Panc1 (cell line): ENCODE measurements at regions of chr11 and their contacts with region 1.

Region 1: DNA sequence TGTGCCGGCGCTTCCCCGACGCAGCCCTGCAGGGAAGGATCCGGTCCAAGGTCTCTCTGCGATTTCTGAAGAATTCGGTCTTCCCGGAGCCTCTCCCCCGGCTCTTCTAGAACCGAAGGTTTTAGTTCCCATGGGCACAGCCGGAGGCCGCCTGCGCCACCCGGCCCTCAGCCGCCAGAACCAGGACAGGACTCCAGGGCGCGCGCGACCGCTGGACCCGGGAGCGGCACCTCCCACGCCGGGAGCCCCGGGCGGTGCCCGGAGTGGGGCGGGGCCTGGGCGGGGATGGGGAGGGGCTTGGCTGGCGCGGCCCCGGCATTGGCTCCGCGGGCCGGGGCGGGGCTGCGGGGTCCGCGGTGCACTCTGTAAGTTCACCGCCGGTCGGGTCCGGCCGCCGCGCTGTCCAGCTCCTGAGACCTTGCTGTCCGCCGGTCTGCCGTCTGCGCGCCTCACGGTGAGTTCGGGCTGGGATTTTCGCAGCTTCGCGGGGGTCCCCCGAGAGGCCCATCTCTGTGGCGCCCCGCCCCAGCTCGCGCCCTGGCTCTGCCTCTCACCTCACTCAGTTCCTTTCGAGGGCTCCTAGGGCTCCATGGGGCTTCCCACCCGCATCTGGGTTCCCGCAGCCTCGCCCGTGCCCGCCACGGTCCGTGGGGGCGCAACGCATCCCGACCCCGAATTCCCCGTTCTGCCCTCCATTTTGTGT is at the start of gene CDC42EP2:
- DNase-seq: no peak
- ATAC-seq: peak; percentile 88
- H3K4me3 ChIP-seq: peak within 1 kb of the TSS; percentile 74 to 75
- H3K27ac ChIP-seq: peak within 1 kb of the TSS; percentile 76
- H3K4me1 ChIP-seq: peaks cover 22% of the 10 kb centered on the region
- H3K27me3 ChIP-seq: no peaks in the 10 kb centered on the region
- CTCF ChIP-seq: no peak
- total RNA-seq, gene CDC42EP2: 8.1 TPM

Region 2: GRCh38 chr11:64778508-64779346 is 535.9 kb before region 1 on chr11 and contains the start of gene SF1:
- CTCF ChIA-PET with region 1: no interaction called
- POLR2A ChIA-PET with region 1: interaction called, 14 read pairs
- in situ Hi-C with region 1: no loop called
- intact Hi-C with region 1: no loop called
- DNase-seq: peak; percentile 100
- ATAC-seq: peak; percentile 95
- H3K4me3 ChIP-seq: peak within 1 kb of the TSS; percentile 88 to 92
- H3K27ac ChIP-seq: peak within 1 kb of the TSS; percentile 98
- H3K4me1 ChIP-seq: peaks cover 16% of the 10 kb centered on the region
- H3K27me3 ChIP-seq: no peaks in the 10 kb centered on the region
- CTCF ChIP-seq: no peak
- total RNA-seq, gene SF1: 360 TPM

Region 3: DNA sequence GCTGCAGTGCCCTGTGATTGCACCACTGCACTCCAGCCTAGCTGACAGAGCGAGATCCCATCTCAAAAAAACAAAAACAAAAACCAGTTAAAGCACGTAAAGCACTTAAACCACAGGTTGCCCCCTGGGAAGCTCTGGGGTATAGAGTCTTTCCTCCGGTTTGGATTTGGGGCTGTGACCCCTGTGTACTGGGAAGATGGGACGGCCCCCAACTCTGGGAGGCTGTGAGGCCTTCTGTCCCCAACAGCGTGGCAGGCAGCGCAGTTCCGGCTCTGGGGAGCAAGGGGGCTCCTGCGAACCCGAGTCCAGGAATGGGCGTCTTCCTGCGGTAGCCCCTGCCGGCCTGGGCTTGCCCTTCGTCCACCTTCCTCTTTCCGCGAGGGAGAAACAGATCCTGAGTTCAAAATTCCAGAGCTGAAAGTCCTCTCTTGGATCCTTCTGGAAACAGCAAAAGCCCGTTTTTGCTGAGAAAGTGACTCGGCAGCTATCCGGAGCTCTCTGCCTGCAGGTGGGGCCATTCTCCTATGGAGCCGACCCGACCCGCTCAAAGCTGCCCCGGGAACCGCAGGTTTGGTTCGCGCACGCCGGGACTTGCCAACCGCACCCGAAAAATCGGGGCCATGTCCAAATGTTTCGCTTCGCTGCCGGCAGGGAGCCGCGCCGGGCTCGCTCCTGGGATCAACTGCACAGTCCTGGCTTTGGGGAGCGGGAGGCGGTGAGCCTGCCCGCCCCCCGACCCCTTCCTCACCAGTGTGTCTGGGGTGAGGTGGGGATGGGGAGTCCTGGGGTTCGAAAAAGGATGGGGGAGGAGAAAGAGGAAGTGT is 89.2 kb before region 1 on chr11:
- CTCF ChIA-PET with region 1: interaction called, 15 read pairs
- POLR2A ChIA-PET with region 1: no interaction called
- in situ Hi-C with region 1: no loop called
- intact Hi-C with region 1: loop called (anchors 10 kb)
- DNase-seq: peak; percentile 27
- ATAC-seq: peak; percentile 91
- H3K4me3 ChIP-seq: peak overlapping the region; percentile 38 to 61
- H3K27ac ChIP-seq: peak overlapping the region; percentile 65
- H3K4me1 ChIP-seq: peaks cover 7% of the 10 kb centered on the region
- H3K27me3 ChIP-seq: no peaks in the 10 kb centered on the region
- CTCF ChIP-seq: peak; percentile 92

Region 4: DNA sequence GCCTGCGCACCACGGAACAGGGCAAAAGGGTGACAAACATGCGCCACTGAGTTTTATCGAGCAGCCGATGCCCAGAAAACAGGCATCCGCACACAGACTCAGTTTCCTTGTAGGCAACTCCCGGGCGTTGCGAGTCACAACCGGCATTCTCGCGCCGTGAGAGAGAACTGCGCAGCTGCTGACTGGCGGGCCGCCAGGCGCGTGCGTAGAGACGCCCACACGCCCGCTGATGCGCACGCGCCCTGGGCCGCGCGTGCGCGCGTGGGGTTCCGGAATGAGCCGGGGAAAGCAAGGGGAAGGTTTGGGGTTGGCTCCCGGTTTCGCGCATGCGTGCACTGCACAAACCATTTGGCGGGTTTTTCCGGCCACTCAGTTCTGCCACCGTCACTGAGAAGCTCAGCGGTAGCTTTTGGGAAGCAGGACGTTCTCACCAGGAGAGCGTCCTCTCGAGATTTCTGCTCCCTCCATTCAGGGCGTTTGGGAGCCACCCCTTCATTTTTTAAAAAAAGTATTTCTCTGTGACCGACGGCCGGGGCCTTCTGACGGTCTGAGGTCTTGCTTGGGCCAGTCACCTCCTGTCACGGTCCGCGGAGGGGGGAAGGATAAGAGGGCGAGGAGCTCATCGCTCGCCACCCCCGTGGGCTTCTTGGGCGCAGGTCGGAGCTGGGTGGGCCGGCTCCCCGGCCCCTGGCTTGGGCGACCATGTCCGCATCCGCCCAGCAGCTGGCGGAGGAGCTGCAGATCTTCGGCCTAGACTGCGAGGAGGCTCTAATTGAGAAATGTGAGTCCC is 52.9 kb before region 1 on chr11 and contains the start of gene POLA2:
- CTCF ChIA-PET with region 1: interaction called, 11 read pairs
- POLR2A ChIA-PET with region 1: no interaction called
- in situ Hi-C with region 1: no loop called
- intact Hi-C with region 1: no loop called
- DNase-seq: peak; percentile 92
- ATAC-seq: peak; percentile 94
- H3K4me3 ChIP-seq: peak within 1 kb of the TSS; percentile 80 to 93
- H3K27ac ChIP-seq: peak within 1 kb of the TSS; percentile 99
- H3K4me1 ChIP-seq: peaks cover 21% of the 10 kb centered on the region
- H3K27me3 ChIP-seq: no peaks in the 10 kb centered on the region
- CTCF ChIP-seq: no peak
- total RNA-seq, gene POLA2: 39.0 TPM

Region 5: GRCh38 chr11:65274735-65275682 is 39.6 kb before region 1 on chr11:
- CTCF ChIA-PET with region 1: interaction called, 177 read pairs
- POLR2A ChIA-PET with region 1: interaction called, 21 read pairs
- in situ Hi-C with region 1: no loop called
- intact Hi-C with region 1: loop called (anchors 2 kb)
- DNase-seq: no peak
- ATAC-seq: peak; percentile 84
- H3K4me3 ChIP-seq: no peak overlapping the region
- H3K27ac ChIP-seq: no peak overlapping the region
- H3K4me1 ChIP-seq: peaks cover 18% of the 10 kb centered on the region; the same call in 1 of the 2 replicates
- H3K27me3 ChIP-seq: no peaks in the 10 kb centered on the region
- CTCF ChIP-seq: peak; percentile 92

Region 6: GRCh38 chr11:65329944-65330403 is 15.3 kb after region 1 on chr11:
- CTCF ChIA-PET with region 1: interaction called, 27 read pairs
- POLR2A ChIA-PET with region 1: interaction called, 10 read pairs
- in situ Hi-C with region 1: no loop called
- intact Hi-C with region 1: no loop called
- DNase-seq: peak; percentile 80
- ATAC-seq: peak; percentile 56
- H3K4me3 ChIP-seq: peak overlapping the region in 1 of 2 experiments; percentile 0; a peak in 1 of 4 replicates
- H3K27ac ChIP-seq: 0 out of 2 replicates have a peak overlapping the region, but pooled peaks have one; percentile 5
- H3K4me1 ChIP-seq: peaks cover 5% of the 10 kb centered on the region
- H3K27me3 ChIP-seq: no peaks in the 10 kb centered on the region
- CTCF ChIP-seq: peak; percentile 94

Region 7: GRCh38 chr11:65382033-65382807 is 67.6 kb after region 1 on chr11 and contains the start of gene SLC25A45:
- CTCF ChIA-PET with region 1: no interaction called
- POLR2A ChIA-PET with region 1: interaction called, 16 read pairs
- in situ Hi-C with region 1: no loop called
- intact Hi-C with region 1: no loop called
- DNase-seq: peak; percentile 85
- ATAC-seq: peak; percentile 93
- H3K4me3 ChIP-seq: peak within 1 kb of the TSS; percentile 36 to 51
- H3K27ac ChIP-seq: peak within 1 kb of the TSS; percentile 92
- H3K4me1 ChIP-seq: peaks cover 39% of the 10 kb centered on the region
- H3K27me3 ChIP-seq: no peaks in the 10 kb centered on the region
- CTCF ChIP-seq: peak; percentile 90; the same call in 1 of the 2 replicates
- total RNA-seq, gene SLC25A45: 9.8 TPM